Heart right ventricle (tissue), 16 donors: ENCODE measurements at regions of chr15 and their contacts with region 1.

Region 1: DNA sequence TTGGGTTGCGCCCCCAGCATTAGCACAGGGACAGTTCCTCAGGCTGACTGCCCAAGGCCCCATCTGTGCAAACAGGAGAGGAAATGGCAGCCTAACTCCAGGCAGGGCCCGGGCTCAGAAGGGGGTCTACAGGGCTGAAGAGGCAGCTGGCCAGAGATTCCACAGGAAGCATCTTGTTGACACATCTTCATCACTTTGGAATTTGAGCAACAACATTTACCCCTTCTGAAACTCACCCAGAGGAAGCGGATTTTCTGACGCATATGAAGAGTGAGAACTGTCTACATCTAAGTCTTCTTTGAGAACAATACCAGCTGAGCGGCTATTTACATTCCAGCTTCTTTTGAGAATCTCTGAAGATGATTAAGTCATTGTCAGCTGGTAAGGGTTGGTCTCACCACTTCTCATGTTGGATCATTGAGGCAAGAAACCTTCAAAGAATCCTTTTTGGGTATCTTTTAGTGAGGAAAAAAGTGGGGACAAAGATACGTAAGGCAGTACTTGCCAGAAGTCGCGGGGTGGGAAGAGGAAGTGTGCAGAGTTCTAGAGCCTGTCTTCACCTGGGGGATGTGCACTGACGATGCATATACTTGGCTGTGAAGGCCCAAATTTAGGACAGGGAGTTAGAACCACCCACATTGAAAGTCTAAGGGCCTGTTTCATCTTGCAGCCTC is 25.4 kb upstream of the SRP14 start:
- DNase-seq: no peak
- ATAC-seq: no peak
- H3K4me3 ChIP-seq: no peak overlapping the region
- H3K27ac ChIP-seq: no peak overlapping the region
- H3K4me1 ChIP-seq: peaks cover 7 to 27% (median 15%) of the 10 kb centered on the region in 9 donors
- H3K27me3 ChIP-seq: no peaks in the 10 kb centered on the region
- CTCF ChIP-seq: no peak

Region 2: DNA sequence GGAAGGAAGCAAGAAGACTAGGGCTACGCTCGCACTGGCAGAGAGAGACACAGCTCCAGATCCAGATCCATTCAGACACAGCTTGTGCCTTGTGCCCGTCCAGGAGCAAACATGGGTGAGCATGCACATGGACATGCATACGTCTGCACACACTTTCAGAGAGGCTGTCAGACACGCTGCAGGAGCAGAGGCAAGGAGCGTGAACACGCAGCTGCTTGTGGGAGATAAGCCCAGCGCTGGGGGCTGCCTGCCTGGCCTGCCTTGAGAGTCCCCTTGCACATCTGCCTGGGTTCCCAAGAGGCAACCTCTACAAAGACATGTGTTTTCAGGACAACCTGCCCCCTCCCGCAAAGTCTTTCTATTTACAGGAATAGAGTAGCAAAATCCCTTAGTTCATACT is 362.8 kb after region 1 on chr15:
- intact Hi-C with region 1: loop called in 1 of 10 experiments (anchors 5 kb)
- DNase-seq: no peak
- ATAC-seq: no peak
- H3K4me3 ChIP-seq: no peak overlapping the region
- H3K27ac ChIP-seq: no peak overlapping the region
- H3K4me1 ChIP-seq: peaks cover 0 to under 1% (median 0%) of the 10 kb centered on the region in 9 donors
- H3K27me3 ChIP-seq: no peaks in the 10 kb centered on the region
- CTCF ChIP-seq: no peak